Colonic mucosa (tissue), 4 donors: ENCODE measurements at regions of chr17 and their contacts with region 1.

Region 1: GRCh38 chr17:38350035-38350434 is 1.6 kb upstream of the SOCS7 start:
- DNase-seq: no peak
- H3K4me3 ChIP-seq: no peak overlapping the region
- H3K27ac ChIP-seq: no peak overlapping the region
- H3K4me1 ChIP-seq: no peaks in the 10 kb centered on the region
- H3K27me3 ChIP-seq: no peaks in the 10 kb centered on the region
- CTCF ChIP-seq: no peak

Region 2: DNA sequence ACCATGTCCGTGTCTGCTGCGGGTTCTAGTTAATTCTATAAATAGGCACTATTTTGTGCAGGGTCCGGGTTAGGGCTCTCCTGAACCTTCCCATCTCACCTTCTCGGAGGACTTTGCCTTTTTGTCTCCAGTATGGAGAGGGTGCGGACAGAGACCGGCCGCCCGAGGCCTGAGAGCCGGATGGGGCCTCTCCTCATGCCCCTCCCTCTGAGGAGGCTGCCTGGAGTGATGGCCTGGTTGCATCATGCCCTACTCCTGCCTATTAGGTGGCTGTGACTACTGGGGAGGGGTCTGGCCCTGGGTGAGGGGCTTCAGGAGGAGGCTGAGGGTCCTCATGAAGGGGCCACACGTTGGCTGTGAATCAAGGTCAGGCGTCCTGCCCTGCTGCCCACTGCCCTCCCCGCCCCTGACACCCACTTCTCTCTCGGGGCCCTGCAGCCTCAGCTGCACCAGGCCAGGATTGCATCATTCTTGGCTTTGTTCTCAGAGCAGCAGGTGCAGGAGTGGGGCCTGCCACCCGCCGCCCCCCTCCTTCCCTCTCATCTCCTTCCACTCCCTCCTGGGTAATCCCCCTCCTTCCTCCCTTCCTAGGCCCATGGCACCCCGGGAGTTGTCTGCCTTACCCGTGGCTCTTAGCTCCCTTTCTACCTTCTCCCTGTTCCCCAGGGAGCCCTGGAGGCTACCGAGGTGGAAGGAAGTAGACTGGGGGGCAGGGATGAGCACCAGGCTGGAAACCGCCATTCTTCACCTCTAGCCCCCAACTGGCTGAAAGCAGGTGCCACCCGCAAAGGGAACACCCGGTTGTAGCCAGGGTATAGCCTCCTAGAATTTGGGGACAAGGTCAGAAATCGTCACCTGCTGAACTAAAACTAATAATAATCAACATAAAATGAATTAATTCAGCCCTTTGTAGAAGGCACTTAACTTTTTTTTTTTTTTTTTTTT is 65.5 kb after region 1 on chr17:
- intact Hi-C with region 1: loop called (anchors 1 kb)
- DNase-seq: no peak
- H3K4me3 ChIP-seq: no peak overlapping the region
- H3K27ac ChIP-seq: no peak overlapping the region
- H3K4me1 ChIP-seq: peaks cover 9% of the 10 kb centered on the region
- H3K27me3 ChIP-seq: peaks cover 22% of the 10 kb centered on the region
- CTCF ChIP-seq: no peak

Region 3: GRCh38 chr17:38444151-38444550 is 94.1 kb after region 1 on chr17:
- intact Hi-C with region 1: no loop called
- DNase-seq: peak; percentile 47
- H3K4me3 ChIP-seq: no peak overlapping the region
- H3K27ac ChIP-seq: no peak overlapping the region
- H3K4me1 ChIP-seq: no peaks in the 10 kb centered on the region
- H3K27me3 ChIP-seq: no peaks in the 10 kb centered on the region
- CTCF ChIP-seq: peak; percentile 69